Endothelial cell of umbilical vein (primary cell): ENCODE measurements at regions of chr13 and their contacts with region 1.

Region 1: DNA sequence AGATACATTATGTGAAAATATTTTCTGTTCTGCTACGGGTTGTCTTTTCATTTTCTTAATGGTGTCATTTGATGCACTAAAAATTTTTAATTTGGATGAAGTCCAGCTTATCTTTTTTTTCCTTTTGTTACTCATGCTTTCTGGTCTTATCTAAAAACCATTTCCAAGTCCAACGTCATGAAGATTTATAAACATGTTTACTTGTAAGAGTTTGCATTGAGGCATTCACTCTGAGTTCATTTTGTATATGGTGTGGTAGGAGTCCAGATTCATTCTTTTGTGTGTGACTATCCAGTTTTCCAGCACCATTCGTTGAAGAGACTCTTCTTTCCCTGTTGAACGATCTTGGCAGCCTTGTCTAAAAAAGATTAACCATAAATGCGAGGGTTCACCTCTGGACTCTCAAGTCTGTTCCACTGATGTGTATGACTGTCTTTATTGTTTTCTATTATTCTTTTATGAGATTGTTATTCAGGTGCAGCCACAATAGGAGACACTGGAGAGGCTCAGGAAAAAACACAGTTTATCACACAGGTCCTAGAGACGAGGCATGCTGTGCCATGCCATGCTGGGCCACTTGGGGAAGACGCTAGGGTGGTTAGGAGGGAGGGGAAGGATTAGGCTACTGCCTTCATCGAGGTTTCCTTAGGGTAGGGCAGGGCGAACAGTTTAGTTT is 35.0 kb downstream of the NAA16 start:
- DNase-seq: peak; percentile 92
- H3K4me3 ChIP-seq: no peak overlapping the region
- H3K27ac ChIP-seq: peak overlapping the region; percentile 54
- H3K4me1 ChIP-seq: peaks cover 18% of the 10 kb centered on the region
- H3K27me3 ChIP-seq: no peaks in the 10 kb centered on the region
- CTCF ChIP-seq: no peak
- POLR2A ChIP-seq: no peak

Region 2: DNA sequence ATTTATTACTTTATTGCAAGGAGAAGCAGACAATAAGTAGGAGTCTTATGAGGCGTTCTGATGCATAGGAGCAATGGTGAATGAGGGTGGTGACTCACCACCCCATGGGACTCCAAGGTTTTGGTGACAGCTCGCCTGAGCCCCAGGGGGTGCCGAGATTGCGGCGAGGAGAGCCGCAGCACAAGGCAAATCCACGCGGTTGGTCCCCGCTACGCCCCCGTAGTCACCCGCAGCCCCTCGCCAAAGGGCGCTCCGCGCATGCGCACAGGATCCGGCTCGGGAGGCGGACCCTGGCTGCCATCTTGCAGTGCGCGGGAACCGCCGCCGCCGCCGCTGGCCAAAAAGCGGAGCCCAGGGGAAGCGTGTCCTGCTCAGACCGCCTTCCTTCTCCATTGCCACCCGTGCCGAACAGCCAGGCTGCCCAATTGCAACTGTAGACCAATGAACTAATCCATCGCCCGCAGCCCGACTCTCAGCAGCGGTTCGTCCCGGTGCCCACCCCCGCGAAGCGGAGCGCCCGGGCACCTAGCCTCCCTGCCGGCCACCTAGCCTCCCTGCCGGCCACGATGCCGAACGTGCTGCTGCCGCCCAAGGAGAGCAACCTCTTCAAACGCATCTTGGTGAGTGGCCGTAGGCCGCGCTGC is 35.0 kb before region 1 on chr13 and contains the start of gene NAA16:
- CTCF ChIA-PET with region 1: no interaction called
- POLR2A ChIA-PET with region 1: no interaction called
- dilution Hi-C with region 1: no loop called
- intact Hi-C with region 1: loop called (anchors 5 kb)
- DNase-seq: peak; percentile 93
- H3K4me3 ChIP-seq: peak within 1 kb of the TSS; percentile 92 to 95 (median 94)
- H3K27ac ChIP-seq: peak within 1 kb of the TSS; percentile 72
- H3K4me1 ChIP-seq: peaks cover 36% of the 10 kb centered on the region
- H3K27me3 ChIP-seq: no peaks in the 10 kb centered on the region
- CTCF ChIP-seq: no peak
- POLR2A ChIP-seq: peak; percentile 84
- total RNA-seq, gene NAA16: 24.1 and 26.1 TPM in 2 replicates